ENCODE measurements at regions of chr6 and their contacts with region 1.

Region 1: GRCh38 chr6:22717915-22718314 is 148.5 kb downstream of the HDGFL1 start:
- DNase-seq: peak; percentile 22
- ATAC-seq: no peak
- H3K4me3 ChIP-seq: no peak overlapping the region
- H3K27ac ChIP-seq: no peak overlapping the region
- H3K4me1 ChIP-seq: peaks cover 16% of the 10 kb centered on the region
- H3K27me3 ChIP-seq: no peaks in the 10 kb centered on the region
- CTCF ChIP-seq: no peak

Region 2: GRCh38 chr6:22512686-22513427 is 205.1 kb before region 1 on chr6:
- CTCF ChIA-PET with region 1: no interaction called
- POLR2A ChIA-PET with region 1: no interaction called
- intact Hi-C with region 1: loop called (anchors 2 kb)
- DNase-seq: no peak
- ATAC-seq: no peak
- H3K4me3 ChIP-seq: no peak overlapping the region
- H3K27ac ChIP-seq: no peak overlapping the region
- H3K4me1 ChIP-seq: no peaks in the 10 kb centered on the region
- H3K27me3 ChIP-seq: no peaks in the 10 kb centered on the region
- CTCF ChIP-seq: no peak

Region 3: DNA sequence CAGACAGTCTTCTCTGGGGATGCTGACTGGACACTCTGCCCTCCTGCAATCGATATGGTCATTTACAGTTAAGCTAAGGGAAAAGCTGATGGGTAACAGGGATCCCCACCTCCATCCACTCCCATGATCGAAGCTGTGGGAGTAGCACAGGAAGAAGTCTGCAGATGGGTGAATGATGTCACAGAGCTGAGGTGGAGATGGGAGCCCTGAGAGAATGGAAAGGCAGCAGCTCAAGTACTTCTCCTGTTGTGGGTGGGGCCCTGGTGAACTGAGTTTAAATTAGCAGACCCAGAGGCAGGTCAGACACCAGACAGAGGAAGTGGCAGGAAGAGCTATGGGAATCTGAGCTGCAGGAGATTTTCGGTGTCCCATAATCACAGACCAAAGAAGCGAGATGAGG is 119.6 kb before region 1 on chr6:
- CTCF ChIA-PET with region 1: no interaction called
- POLR2A ChIA-PET with region 1: no interaction called
- intact Hi-C with region 1: no loop called
- DNase-seq: no peak
- ATAC-seq: no peak
- H3K4me3 ChIP-seq: no peak overlapping the region
- H3K27ac ChIP-seq: no peak overlapping the region
- H3K4me1 ChIP-seq: peaks cover 17% of the 10 kb centered on the region
- H3K27me3 ChIP-seq: no peaks in the 10 kb centered on the region
- CTCF ChIP-seq: no peak

Region 4: GRCh38 chr6:22747571-22747970 is 29.7 kb after region 1 on chr6:
- CTCF ChIA-PET with region 1: no interaction called
- POLR2A ChIA-PET with region 1: no interaction called
- intact Hi-C with region 1: loop called (anchors 1 kb)
- DNase-seq: no peak
- ATAC-seq: no peak
- H3K4me3 ChIP-seq: no peak overlapping the region
- H3K27ac ChIP-seq: no peak overlapping the region
- H3K4me1 ChIP-seq: 0 out of 2 replicates have a peak, but pooled peaks cover 8% of the 10 kb centered on the region
- H3K27me3 ChIP-seq: no peaks in the 10 kb centered on the region
- CTCF ChIP-seq: no peak